ENCODE measurements at regions of chr17 and their contacts with region 1.

Region 1: GRCh38 chr17:27862004-27862403 is 31.2 kb downstream of the LYRM9 start:
- DNase-seq: no peak
- ATAC-seq: no peak
- H3K4me3 ChIP-seq: no peak overlapping the region
- H3K27ac ChIP-seq: no peak overlapping the region
- H3K4me1 ChIP-seq: no peaks in the 10 kb centered on the region
- H3K27me3 ChIP-seq: no peaks in the 10 kb centered on the region
- CTCF ChIP-seq: no peak

Region 2: GRCh38 chr17:27666831-27667560 is 195.0 kb before region 1 on chr17:
- intact Hi-C with region 1: loop called in 1 of 10 experiments (anchors 10 kb)
- DNase-seq: no peak
- ATAC-seq: no peak
- H3K4me3 ChIP-seq: no peak overlapping the region
- H3K27ac ChIP-seq: no peak overlapping the region
- H3K4me1 ChIP-seq: no peaks in the 10 kb centered on the region
- H3K27me3 ChIP-seq: no peaks in the 10 kb centered on the region
- CTCF ChIP-seq: no peak

Region 3: GRCh38 chr17:27892866-27893769 is 31.1 kb after region 1 on chr17 and contains the start of gene LYRM9:
- intact Hi-C with region 1: no loop called
- DNase-seq: peak; percentile 91 to 96
- ATAC-seq: peak; percentile 99 to 100 (median 100)
- H3K4me3 ChIP-seq: peak within 1 kb of the TSS; percentile 54 to 86 (median 76)
- H3K27ac ChIP-seq: peak within 1 kb of the TSS; percentile 72 to 96 (median 88)
- H3K4me1 ChIP-seq: peaks cover 0 to 28% (median 12%) of the 10 kb centered on the region in 9 donors
- H3K27me3 ChIP-seq: peaks cover 0 to 10% (median 0%) of the 10 kb centered on the region in 7 donors
- CTCF ChIP-seq: peak; percentile 83 to 99 (median 95)
- total RNA-seq, gene LYRM9: 8.7 to 13.3 (median 9.8) TPM

Region 4: GRCh38 chr17:27915709-27916108 is 53.7 kb after region 1 on chr17:
- intact Hi-C with region 1: no loop called
- DNase-seq: no peak
- ATAC-seq: no peak
- H3K4me3 ChIP-seq: no peak overlapping the region
- H3K27ac ChIP-seq: no peak overlapping the region
- H3K4me1 ChIP-seq: peaks cover 0 to 6% (median 0%) of the 10 kb centered on the region in 9 donors
- H3K27me3 ChIP-seq: no peaks in the 10 kb centered on the region
- CTCF ChIP-seq: no peak